ENCODE measurements at regions of chr4 and their contacts with region 1.

Region 1: DNA sequence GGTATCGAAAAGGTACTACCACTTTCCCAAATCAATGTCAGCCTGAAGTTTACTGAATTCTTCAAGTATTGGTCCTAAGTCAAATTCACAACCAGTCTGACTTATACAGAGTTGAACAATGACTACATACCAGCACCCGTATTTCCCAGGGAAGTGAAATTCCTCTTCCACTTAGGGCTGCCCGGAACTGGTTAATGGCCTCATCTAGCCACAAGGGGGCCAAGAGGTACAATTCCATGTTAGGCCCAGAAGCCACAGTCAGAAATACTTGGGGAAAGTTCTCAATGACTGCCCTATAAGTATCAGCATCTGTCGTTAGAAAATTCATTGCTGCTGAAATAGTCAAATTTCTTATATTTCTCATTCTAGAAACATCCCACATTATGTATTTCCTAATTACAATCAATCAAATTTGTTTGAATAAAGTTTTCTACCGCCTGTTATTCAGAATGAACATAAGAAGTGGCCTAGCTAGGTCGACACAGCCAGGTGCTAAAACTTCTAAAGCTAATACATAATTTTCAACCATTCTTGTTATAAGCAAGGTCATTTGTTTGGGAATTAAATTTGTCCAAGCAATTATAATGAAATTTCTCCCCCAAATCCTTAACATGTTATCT is 5.7 kb upstream of the PCDH7 start:
- DNase-seq: no peak
- H3K4me3 ChIP-seq: no peak overlapping the region
- H3K27ac ChIP-seq: no peak overlapping the region
- H3K27me3 ChIP-seq: no peaks in the 10 kb centered on the region
- CTCF ChIP-seq: peak; percentile 90

Region 2: DNA sequence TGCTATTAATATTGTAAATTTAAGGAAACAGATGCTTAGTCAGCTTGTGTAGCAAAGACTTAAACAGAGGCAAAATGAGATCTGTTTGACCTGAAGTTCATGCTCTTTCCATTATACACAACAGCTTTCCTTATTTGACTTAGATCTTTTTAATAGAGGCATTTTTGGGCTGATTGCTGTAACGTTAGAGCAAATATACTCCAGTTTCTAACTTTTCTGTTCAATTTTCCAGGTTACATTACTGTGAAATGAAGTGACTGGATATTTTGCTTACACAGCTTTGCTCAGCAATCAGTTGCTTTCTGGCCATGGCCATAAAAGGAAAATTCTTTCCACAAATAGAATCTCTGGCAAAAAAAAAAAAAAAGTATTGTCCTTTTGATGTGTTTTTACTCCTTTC is 151.8 kb after region 1 on chr4:
- CTCF ChIA-PET with region 1: no interaction called
- POLR2A ChIA-PET with region 1: interaction called, 10 read pairs
- DNase-seq: no peak
- H3K4me3 ChIP-seq: no peak overlapping the region
- H3K27ac ChIP-seq: no peak overlapping the region
- H3K27me3 ChIP-seq: no peaks in the 10 kb centered on the region
- CTCF ChIP-seq: no peak

Region 3: DNA sequence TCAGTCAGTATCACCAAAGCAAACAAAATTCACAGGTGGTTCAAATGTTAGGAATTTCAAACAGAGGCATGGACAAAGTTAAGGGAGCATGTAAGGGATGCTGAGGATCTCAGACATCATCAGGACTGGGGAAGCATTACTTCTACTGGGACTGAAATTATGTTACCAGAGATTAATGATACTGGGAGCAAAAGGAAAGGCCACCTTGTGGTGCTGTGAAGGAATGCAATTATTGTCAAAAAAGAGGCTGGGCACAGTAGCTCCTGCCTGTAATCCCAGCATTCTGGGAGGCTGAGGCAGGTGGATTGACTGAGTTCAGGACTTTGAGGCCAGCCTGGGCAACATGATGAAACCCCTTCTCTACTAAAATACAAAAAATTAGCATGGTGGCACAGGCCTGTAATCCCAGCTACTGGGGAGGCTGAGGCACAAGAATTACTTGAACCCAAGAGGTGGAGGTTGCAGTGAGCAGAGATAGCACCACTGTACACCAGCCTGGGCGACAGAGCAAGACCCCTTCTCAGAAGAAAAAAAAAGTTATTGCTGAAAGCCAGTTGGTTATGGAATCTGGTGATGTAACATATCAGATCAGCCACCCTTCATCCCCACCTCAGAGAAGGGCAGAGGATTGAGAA is 959.9 kb after region 1 on chr4:
- CTCF ChIA-PET with region 1: interaction called, 26 read pairs
- POLR2A ChIA-PET with region 1: no interaction called
- DNase-seq: no peak
- H3K4me3 ChIP-seq: no peak overlapping the region
- H3K27ac ChIP-seq: no peak overlapping the region
- H3K27me3 ChIP-seq: no peaks in the 10 kb centered on the region
- CTCF ChIP-seq: peak; percentile 51